ENCODE measurements at regions of chr16 and their contacts with region 1.

Region 1: GRCh38 chr16:81314603-81315270 is at the start of gene GAN:
- DNase-seq: peak; percentile 97
- ATAC-seq: peak; percentile 91
- H3K4me3 Mint-ChIP-seq: peak within 1 kb of the TSS; percentile 99
- H3K27ac Mint-ChIP-seq: peak within 1 kb of the TSS; percentile 97
- H3K4me1 Mint-ChIP-seq: peaks cover 66% of the 10 kb centered on the region
- H3K27me3 Mint-ChIP-seq: no peaks in the 10 kb centered on the region
- total RNA-seq, gene GAN: 13.4 to 13.8 TPM

Region 2: DNA sequence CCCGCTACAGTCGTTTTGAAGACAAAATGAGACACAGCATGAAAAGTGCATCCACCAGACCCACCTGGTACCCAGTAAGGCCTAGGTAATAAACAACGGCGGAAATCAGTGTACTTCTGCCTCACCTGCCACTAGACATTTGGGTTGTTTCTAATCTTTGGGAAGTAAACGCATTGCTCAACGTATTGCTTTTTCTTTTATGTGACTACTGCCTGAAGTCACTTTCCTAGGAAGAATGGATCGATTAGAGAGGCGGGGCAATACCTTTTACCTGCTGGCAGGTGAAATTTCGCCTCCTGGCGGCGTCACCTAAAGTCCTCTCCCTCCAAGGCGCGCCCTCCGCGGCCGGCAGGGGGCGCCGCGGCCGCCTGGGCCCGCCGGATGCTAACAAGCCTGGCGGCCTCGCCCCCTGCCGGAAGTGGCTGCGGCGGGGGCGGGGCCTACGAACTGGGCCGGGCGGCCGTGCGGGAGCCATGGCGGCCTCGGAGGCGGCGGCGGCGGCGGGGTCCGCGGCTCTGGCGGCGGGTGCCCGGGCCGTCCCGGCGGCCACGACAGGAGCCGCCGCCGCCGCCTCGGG is 279.3 kb before region 1 on chr16 and contains the start of gene ATMIN:
- CTCF ChIA-PET with region 1: no interaction called
- POLR2A ChIA-PET with region 1: no interaction called
- intact Hi-C with region 1: loop called in 1 of 2 experiments (anchors 1 kb)
- DNase-seq: peak; percentile 93
- ATAC-seq: peak; percentile 91
- H3K4me3 Mint-ChIP-seq: peak within 1 kb of the TSS; percentile 80
- H3K27ac Mint-ChIP-seq: peak within 1 kb of the TSS; percentile 48
- H3K4me1 Mint-ChIP-seq: peaks cover 30% of the 10 kb centered on the region
- H3K27me3 Mint-ChIP-seq: no peaks in the 10 kb centered on the region
- total RNA-seq, gene ATMIN: 20.3 to 31.2 TPM

Region 3: GRCh38 chr16:81095953-81096717 is 218.6 kb before region 1 on chr16 and contains the start of gene GCSH:
- CTCF ChIA-PET with region 1: no interaction called
- POLR2A ChIA-PET with region 1: no interaction called
- intact Hi-C with region 1: loop called in 1 of 2 experiments (anchors 2 kb)
- DNase-seq: peak; percentile 99
- ATAC-seq: peak; percentile 99
- H3K4me3 Mint-ChIP-seq: peak within 1 kb of the TSS; percentile 72
- H3K27ac Mint-ChIP-seq: peak within 1 kb of the TSS; percentile 78
- H3K4me1 Mint-ChIP-seq: peaks cover 16% of the 10 kb centered on the region
- H3K27me3 Mint-ChIP-seq: no peaks in the 10 kb centered on the region
- total RNA-seq, gene GCSH: 22.2 to 24.9 TPM

Region 4: DNA sequence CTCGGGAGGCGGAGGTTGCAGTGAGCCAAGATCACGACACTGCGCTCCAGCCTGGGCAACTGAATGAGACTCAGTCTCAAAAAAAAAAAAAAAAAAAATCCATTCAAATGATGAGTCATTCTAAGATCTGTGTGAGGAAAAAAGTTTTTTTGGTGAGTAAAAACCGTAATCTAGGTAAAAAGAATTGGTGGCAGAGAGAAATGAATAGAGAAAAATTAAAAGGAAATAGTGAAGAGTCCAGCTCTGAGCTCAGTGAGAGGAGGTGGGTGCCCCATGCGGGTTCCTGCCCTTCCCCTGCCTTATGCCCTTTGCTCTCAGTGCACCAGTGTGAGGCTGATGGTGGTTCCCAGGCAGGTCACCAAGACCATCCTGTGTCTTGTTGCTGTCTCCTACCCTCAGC is 20.9 kb after region 1 on chr16:
- CTCF ChIA-PET with region 1: interaction called, 6 read pairs
- POLR2A ChIA-PET with region 1: interaction called, 9 read pairs
- intact Hi-C with region 1: loop called (anchors 1 to 2 kb)
- DNase-seq: peak; percentile 79
- ATAC-seq: peak; percentile 98
- H3K4me3 Mint-ChIP-seq: no peak overlapping the region
- H3K27ac Mint-ChIP-seq: peak overlapping the region; percentile 57
- H3K4me1 Mint-ChIP-seq: peaks cover 27% of the 10 kb centered on the region
- H3K27me3 Mint-ChIP-seq: no peaks in the 10 kb centered on the region

Region 5: DNA sequence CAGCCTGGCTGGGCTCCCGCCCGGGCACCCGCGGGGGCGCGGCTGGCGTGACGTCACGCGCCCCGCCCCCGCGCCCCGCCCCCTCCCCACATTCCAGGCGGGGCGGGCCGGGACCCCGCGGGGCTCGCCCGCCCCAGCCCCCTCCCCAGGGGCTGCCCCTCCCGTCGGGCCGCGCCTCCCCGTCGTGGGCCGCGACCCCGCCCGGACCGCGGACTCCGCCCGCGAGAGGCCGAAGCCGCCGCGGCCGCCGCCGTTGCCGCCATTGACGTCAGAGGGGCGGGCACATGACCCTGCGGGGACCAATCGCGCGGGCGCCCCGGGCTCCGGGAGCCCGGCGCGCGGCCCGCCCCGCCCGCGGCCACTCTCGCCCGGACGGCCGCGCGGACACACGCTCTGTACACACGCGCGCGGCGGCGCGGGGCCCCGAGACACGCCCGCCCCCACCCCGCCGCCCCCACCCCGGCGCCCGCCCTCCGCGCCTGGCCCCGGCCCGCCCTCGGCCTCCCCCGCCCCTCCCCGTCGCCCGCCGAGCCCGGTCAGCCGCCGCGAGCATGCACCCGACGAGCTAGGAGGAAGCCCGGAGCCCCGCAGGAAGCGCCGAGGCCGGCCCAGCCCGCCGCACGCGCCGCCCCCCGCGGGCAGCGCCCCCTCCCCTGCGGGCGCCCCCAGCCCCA is 129.8 kb after region 1 on chr16 and contains the start of gene CMIP:
- CTCF ChIA-PET with region 1: interaction called, 3 read pairs
- POLR2A ChIA-PET with region 1: no interaction called
- intact Hi-C with region 1: loop called (anchors 1 to 5 kb)
- DNase-seq: peak; percentile 89
- ATAC-seq: peak; percentile 73
- H3K4me3 Mint-ChIP-seq: peak within 1 kb of the TSS; percentile 96
- H3K27ac Mint-ChIP-seq: peak within 1 kb of the TSS; percentile 93
- H3K4me1 Mint-ChIP-seq: peaks cover 34% of the 10 kb centered on the region
- H3K27me3 Mint-ChIP-seq: no peaks in the 10 kb centered on the region
- total RNA-seq, gene CMIP: 39.1 to 40.3 TPM

Region 6: GRCh38 chr16:81715358-81716196 is 400.8 kb after region 1 on chr16:
- CTCF ChIA-PET with region 1: no interaction called
- POLR2A ChIA-PET with region 1: no interaction called
- intact Hi-C with region 1: loop called in 1 of 2 experiments (anchors 5 kb)
- DNase-seq: no peak
- ATAC-seq: peak; percentile 33
- H3K4me3 Mint-ChIP-seq: no peak overlapping the region
- H3K27ac Mint-ChIP-seq: peak overlapping the region; percentile 74
- H3K4me1 Mint-ChIP-seq: peaks cover 47% of the 10 kb centered on the region
- H3K27me3 Mint-ChIP-seq: no peaks in the 10 kb centered on the region

Measured in activated CD4-positive, alpha-beta T cell treated with anti-CD3 and anti-CD28 coated beads for 36 hours (primary cell).